GM13977 (cell line): ENCODE measurements at regions of chr16 and their contacts with region 1.

Region 1: GRCh38 chr16:3880623-3881498 is at the start of gene CREBBP:
- DNase-seq: peak; percentile 96
- CTCF ChIP-seq: no peak

Region 2: GRCh38 chr16:3690470-3690928 is 190.4 kb before region 1 on chr16:
- in situ Hi-C with region 1: loop called (anchors 25 kb)
- DNase-seq: peak; percentile 85
- CTCF ChIP-seq: peak; percentile 96